Prostate gland (tissue), 2 donors: ENCODE measurements at regions of chr2 and their contacts with region 1.

Region 1: GRCh38 chr2:98385050-98385699 is 38.9 kb downstream of the CNGA3 start:
- DNase-seq: peak; percentile 66
- H3K4me3 ChIP-seq: no peak overlapping the region
- H3K27ac ChIP-seq: no peak overlapping the region
- H3K4me1 ChIP-seq: no peaks in the 10 kb centered on the region
- H3K27me3 ChIP-seq: no peaks in the 10 kb centered on the region
- CTCF ChIP-seq: peak; percentile 64 to 93 (median 91)
- POLR2A ChIP-seq: peak; percentile 5

Region 2: GRCh38 chr2:97697252-97698235 is 687.6 kb before region 1 on chr2:
- intact Hi-C with region 1: loop called (anchors 5 kb)
- DNase-seq: peak; percentile 90
- H3K4me3 ChIP-seq: no peak overlapping the region
- H3K27ac ChIP-seq: no peak overlapping the region
- H3K4me1 ChIP-seq: no peaks in the 10 kb centered on the region
- H3K27me3 ChIP-seq: no peaks in the 10 kb centered on the region
- CTCF ChIP-seq: peak; percentile 91 to 98 (median 96)
- POLR2A ChIP-seq: no peak

Region 3: DNA sequence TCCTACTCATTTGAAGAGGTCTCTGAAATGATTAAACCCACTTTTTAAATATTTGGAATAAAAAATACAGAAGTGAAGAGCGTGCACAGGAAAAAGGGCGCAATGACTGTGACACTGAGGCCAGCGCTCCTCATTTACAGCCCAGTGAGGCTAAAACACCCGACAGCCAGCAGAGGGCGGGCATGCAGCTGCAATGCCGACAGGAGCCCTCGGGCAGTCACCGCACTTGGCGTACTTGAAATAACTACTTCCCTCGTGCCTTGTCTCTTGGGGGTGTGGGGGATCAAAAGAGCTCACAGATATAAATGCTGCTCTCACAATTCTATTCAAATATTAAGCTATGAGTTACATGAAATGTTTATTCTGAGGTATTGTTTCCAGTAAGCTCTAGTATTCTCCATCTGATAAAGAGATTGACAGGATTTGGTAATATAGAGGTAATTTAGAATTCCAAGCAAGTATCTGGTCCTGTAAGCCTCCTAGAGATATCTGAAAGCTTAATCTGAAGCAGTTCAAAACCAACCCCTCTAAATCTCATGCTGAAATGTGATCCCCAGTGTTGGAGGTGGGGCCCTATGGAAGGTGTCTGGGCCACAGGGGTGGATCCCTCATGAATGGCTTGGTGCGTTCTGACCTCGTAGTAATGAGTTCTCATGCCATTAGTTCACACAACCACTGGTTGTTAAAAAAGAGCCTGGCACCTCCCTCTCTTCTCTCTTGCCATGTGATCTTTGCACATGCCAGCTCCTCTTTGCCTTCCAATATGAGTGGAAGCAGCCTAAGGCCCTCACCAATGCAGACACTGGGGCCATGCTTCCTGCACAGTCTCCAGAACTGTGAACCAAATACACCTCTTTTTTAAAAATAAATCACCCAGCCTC is 578.2 kb before region 1 on chr2:
- intact Hi-C with region 1: loop called (anchors 1 kb)
- DNase-seq: peak; percentile 80
- H3K4me3 ChIP-seq: no peak overlapping the region
- H3K27ac ChIP-seq: no peak overlapping the region
- H3K4me1 ChIP-seq: no peaks in the 10 kb centered on the region
- H3K27me3 ChIP-seq: no peaks in the 10 kb centered on the region
- CTCF ChIP-seq: peak; percentile 85 to 94 (median 90)
- POLR2A ChIP-seq: no peak

Region 4: DNA sequence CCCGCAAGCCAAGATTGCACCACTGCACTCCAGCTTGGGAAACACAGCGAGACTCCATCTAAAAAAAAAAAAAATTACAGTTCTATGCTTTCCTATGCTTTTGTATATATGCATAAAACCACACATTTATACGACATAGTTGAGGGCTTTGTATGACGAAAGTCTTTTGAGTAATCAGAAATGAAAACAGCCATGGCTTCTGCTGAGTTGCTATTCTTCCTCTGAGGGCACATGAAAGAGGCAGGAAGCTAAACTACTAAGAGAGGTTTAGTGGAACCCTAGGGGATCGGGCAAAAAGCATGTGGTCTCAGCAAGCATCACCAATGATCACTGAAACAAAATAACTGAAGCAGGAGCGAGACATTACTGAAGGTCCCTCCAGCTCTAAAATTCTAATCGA is 572.2 kb before region 1 on chr2:
- intact Hi-C with region 1: loop called (anchors 2 kb)
- DNase-seq: no peak
- H3K4me3 ChIP-seq: no peak overlapping the region
- H3K27ac ChIP-seq: no peak overlapping the region
- H3K4me1 ChIP-seq: no peaks in the 10 kb centered on the region
- H3K27me3 ChIP-seq: no peaks in the 10 kb centered on the region
- CTCF ChIP-seq: no peak
- POLR2A ChIP-seq: no peak